Heart right ventricle (tissue), 16 donors: ENCODE measurements at regions of chr6 and their contacts with region 1.

Region 1: GRCh38 chr6:52995913-52996645 is 995 bp upstream of the GSTA4 start:
- DNase-seq: peak; percentile 15 to 21
- ATAC-seq: no peak
- H3K4me3 ChIP-seq: peak overlapping the region in 8 of 10 donors; percentile 16 to 81 (median 55)
- H3K27ac ChIP-seq: peak overlapping the region in 9 of 10 donors; percentile 66 to 94 (median 88)
- H3K4me1 ChIP-seq: peaks cover 0 to 31% (median 19%) of the 10 kb centered on the region in 9 donors
- H3K27me3 ChIP-seq: no peaks in the 10 kb centered on the region
- CTCF ChIP-seq: no peak

Region 2: GRCh38 chr6:52419809-52420670 is 576.0 kb before region 1 on chr6 and contains the start of gene EFHC1:
- intact Hi-C with region 1: loop called in 1 of 10 experiments (anchors 10 kb)
- DNase-seq: peak; percentile 98 to 99
- ATAC-seq: peak; percentile 96 to 98 (median 97)
- H3K4me3 ChIP-seq: peak within 1 kb of the TSS; percentile 60 to 91 (median 80)
- H3K27ac ChIP-seq: peak within 1 kb of the TSS; percentile 52 to 94 (median 87)
- H3K4me1 ChIP-seq: peaks cover 0 to 62% (median 23%) of the 10 kb centered on the region in 9 donors
- H3K27me3 ChIP-seq: no peaks in the 10 kb centered on the region
- CTCF ChIP-seq: peak in 1 of 9 donors; percentile 3
- total RNA-seq, gene EFHC1: 3.3 to 7.6 (median 5.8) TPM

Region 3: GRCh38 chr6:52664186-52664990 is 331.7 kb before region 1 on chr6:
- intact Hi-C with region 1: loop called in 1 of 10 experiments (anchors 10 kb)
- DNase-seq: peak; percentile 91 to 92
- ATAC-seq: peak; percentile 97 to 99 (median 99)
- H3K4me3 ChIP-seq: peak overlapping the region; percentile 24 to 83 (median 71)
- H3K27ac ChIP-seq: peak overlapping the region in 9 of 10 donors; percentile 43 to 80 (median 74)
- H3K4me1 ChIP-seq: peaks cover 0 to 21% (median 8%) of the 10 kb centered on the region in 9 donors
- H3K27me3 ChIP-seq: peaks cover 0 to 19% (median 0%) of the 10 kb centered on the region in 7 donors
- CTCF ChIP-seq: no peak

Region 4: DNA sequence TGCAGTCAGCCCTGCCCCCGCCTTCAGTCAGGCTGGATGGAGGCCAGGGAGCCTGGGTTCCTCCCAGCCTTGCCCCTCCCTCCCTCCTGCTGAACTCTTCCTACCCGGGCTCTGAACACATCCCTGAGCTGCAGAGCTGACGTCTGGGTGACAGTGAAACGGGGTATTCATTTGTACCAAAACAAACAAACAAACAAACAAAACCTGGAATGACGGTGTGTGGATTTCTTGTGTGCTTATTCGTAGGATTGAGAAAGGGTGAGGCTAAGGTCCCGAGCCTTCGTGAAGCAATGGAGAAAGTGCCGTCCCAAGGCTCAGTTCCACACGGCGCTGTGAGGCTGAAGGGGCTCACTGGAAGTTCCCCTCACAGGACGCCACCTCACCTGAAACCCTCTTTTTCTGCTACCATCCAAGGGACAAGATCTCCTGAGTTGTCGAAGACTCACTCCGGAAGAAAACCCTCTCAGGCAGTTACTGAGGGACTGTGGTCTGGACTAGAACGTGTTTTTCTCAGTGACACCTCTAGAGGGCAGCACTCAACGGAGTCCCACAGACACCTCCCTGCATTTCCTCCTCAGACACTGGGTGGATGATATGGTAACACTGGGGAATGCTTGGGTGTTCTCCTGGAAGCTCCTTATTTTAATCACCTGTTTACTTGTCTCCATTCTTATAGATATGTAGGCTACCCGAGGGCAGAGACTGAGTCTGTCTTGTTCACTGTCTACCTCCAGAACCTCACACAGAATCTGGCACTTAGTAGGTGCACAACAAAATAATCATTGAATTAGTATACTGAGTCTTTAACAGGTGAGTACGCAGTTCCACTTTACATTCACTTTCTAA is 113.9 kb before region 1 on chr6:
- intact Hi-C with region 1: loop called in 2 of 10 experiments (anchors 5 to 10 kb)
- DNase-seq: peak; percentile 37 to 62
- ATAC-seq: peak; percentile 87 to 99 (median 96)
- H3K4me3 ChIP-seq: peak overlapping the region; percentile 19 to 63 (median 55)
- H3K27ac ChIP-seq: peak overlapping the region in 1 of 10 donors; percentile 15
- H3K4me1 ChIP-seq: peaks cover 0 to 8% (median 0%) of the 10 kb centered on the region in 9 donors
- H3K27me3 ChIP-seq: no peaks in the 10 kb centered on the region
- CTCF ChIP-seq: peak; percentile 55 to 89 (median 85)

Region 5: DNA sequence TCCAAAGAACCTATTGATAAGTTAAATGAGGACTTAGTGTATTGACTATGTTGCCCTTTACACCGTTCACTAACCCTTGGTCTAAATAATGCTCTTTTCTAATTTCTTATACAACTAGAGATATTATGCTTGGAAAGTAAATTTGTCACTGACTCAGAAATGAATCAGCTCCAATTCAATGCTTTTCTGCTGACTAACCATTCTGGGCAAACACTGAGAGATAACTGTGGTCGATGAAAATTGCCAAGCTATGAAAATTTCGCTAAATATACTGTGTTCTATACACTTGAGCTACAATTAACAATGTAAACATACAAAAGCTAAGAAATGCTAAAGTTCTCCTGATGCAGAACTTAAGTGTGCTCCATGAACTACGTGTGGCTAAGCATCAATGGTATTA is 46.0 kb after region 1 on chr6:
- intact Hi-C with region 1: loop called in 2 of 10 experiments (anchors 5 kb)
- DNase-seq: no peak
- ATAC-seq: no peak
- H3K4me3 ChIP-seq: no peak overlapping the region
- H3K27ac ChIP-seq: peak overlapping the region in 7 of 10 donors; percentile 25 to 85 (median 78)
- H3K4me1 ChIP-seq: peaks cover 3 to 56% (median 39%) of the 10 kb centered on the region in 9 donors
- H3K27me3 ChIP-seq: no peaks in the 10 kb centered on the region
- CTCF ChIP-seq: no peak

Region 6: DNA sequence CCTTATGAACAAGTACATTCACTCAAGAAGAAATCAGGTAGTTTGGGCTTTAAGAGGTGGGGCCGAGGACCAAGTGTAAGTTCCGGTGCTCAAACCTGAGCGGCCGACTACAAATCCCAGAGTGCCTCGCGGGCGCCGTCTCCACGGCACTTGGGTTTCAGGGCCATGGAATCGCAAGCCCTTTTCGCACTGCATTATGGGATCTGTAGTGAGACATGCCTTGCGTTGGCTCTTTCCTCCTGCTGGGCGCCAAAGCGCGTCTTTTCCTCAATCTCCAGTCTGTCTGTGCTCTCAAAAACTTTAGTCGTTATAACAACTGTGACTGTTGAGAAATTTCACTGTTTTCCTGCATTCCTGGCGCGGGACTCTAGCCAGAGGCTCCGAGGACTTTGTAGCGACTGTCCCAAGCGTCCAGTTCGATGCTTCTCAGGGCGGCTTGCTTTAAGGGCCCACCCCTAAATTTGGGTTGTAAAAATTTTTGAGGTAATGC is 68.7 kb after region 1 on chr6:
- intact Hi-C with region 1: loop called in 2 of 10 experiments (anchors 1 kb)
- DNase-seq: peak; percentile 94 to 99
- ATAC-seq: peak; percentile 89 to 95 (median 91)
- H3K4me3 ChIP-seq: peak overlapping the region; percentile 55 to 94 (median 78)
- H3K27ac ChIP-seq: peak overlapping the region; percentile 65 to 98 (median 93)
- H3K4me1 ChIP-seq: peaks cover 9 to 57% (median 45%) of the 10 kb centered on the region in 9 donors
- H3K27me3 ChIP-seq: no peaks in the 10 kb centered on the region
- CTCF ChIP-seq: peak in 2 of 9 donors; percentile 12 to 18

Region 7: DNA sequence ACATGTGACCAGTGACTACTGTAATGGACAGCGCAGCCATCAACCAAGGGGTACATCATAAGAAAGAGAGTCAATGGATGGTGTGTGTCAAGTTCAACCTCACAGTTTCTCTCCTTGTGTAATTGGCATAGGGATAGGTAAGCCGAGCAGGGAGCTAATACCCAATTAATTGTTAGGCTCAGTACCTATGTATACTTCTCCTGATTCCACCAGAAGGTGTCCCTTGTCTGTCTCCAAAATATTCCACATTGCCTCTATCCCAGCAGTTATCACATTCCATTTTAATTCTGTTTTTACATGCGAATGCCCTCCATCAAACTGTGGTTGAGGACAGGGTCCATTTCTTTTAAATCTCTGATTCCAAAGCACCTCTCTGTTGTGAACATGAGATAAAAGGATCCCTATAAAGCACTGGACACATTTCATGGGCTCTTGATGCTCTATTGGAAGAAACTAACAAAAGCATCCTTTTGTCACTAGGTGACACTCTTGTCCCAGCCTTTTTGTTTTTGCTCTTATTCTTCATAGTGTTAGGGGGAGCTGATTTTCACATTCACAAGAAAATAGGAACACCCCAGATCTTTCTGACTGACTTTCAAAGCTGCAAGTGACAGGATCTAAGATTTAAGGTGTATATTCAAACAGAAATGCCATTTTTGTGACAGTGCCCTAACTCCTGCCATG is 108.1 kb after region 1 on chr6:
- intact Hi-C with region 1: no loop called
- DNase-seq: no peak
- ATAC-seq: no peak
- H3K4me3 ChIP-seq: no peak overlapping the region
- H3K27ac ChIP-seq: no peak overlapping the region
- H3K4me1 ChIP-seq: no peaks in the 10 kb centered on the region
- H3K27me3 ChIP-seq: no peaks in the 10 kb centered on the region
- CTCF ChIP-seq: peak in 2 of 9 donors; percentile 9 to 15

Region 8: DNA sequence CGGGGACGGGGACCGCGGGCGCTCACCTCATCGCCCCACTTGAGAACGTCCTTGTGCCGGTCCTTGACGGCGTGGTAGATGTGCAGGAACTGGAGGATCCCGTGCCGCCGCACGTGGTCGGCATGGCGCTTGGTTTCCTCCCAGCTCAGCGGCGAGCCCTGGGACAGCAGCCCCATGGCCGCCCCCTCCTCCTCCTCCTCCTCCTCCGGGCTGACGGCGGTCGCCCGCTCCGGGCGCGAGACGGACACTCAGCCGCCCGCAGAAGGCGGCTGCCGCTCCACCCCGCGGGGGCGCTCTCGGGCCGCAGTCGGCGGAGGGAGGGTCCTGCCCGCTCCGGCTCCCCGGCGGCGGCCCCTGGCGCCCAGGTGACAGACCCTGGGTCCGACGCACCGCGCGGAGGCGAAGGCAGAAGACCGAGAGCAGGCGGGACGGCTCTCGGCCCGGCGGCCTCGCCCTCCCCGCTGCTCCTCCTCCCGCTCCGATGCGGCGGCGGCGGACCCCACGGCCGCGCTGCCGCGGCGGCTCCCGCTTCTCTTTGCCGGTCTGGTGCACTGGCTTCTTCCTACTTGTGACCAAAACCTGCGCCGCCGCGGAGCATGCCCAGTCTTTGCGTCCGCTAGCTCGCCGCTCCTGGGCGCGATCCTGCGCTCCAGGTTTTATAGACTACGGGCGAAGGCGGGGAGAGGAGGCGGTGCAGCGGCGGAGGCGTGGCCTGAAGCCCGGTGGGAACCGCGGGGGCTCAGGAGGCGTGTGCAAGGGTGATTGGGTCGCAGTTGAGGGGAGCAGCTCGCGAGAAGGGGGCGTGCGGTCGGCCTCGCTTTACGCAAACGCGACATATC is 548.6 kb after region 1 on chr6 and contains the start of gene GCLC:
- intact Hi-C with region 1: loop called in 2 of 10 experiments (anchors 5 to 10 kb)
- DNase-seq: peak; percentile 95
- ATAC-seq: peak; percentile 80 to 88 (median 83)
- H3K4me3 ChIP-seq: peak within 1 kb of the TSS; percentile 55 to 94 (median 82)
- H3K27ac ChIP-seq: peak within 1 kb of the TSS; percentile 46 to 99 (median 95)
- H3K4me1 ChIP-seq: peaks cover 0 to 56% (median 42%) of the 10 kb centered on the region in 9 donors
- H3K27me3 ChIP-seq: no peaks in the 10 kb centered on the region
- CTCF ChIP-seq: peak; percentile 49 to 88 (median 70)
- total RNA-seq, gene GCLC: 13.9 to 42.8 (median 34.6) TPM